Activated B cell treated with CpG ODN at 0.5 μM for 24 hours (primary cell): ENCODE measurements at regions of chr3 and their contacts with region 1.

Region 1: GRCh38 chr3:114418724-114419543 is 125.1 kb downstream of the TIGIT start:
- DNase-seq: no peak
- ATAC-seq: peak; percentile 75
- H3K4me3 Mint-ChIP-seq: peak overlapping the region; percentile 64
- H3K27ac Mint-ChIP-seq: peak overlapping the region; percentile 83
- H3K4me1 Mint-ChIP-seq: peaks cover 45% of the 10 kb centered on the region
- H3K27me3 Mint-ChIP-seq: no peaks in the 10 kb centered on the region
- CTCF ChIP-seq: peak; percentile 22

Region 2: DNA sequence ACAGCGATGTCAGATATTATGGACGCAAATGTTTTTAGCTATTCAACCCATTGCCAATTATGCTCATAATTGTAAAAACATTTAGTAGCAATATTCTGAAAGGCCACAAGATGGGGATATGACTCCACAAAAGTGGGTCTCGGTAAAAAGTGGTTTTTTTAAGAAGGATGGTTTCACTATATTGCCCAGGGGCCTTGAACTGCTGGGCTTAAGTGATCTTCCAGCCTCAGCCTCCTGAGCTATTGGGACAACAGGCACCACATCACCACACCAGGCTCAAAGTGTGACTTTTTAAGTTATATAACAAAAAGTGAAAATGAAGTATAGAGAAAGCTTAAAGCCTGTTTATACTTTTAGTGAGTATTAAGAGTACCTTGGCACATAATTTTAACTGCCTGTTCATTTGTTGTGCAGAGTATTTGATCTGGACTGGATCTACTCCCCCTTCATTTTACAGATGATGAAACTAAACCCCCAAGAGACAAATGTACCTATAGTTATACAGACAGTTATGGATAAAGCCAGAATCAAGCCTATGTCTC is 682.3 kb before region 1 on chr3:
- CTCF ChIA-PET with region 1: no interaction called
- POLR2A ChIA-PET with region 1: no interaction called
- intact Hi-C with region 1: loop called (anchors 2 kb)
- DNase-seq: no peak
- ATAC-seq: peak; percentile 86
- H3K4me3 Mint-ChIP-seq: no peak overlapping the region
- H3K27ac Mint-ChIP-seq: peak overlapping the region; percentile 76
- H3K4me1 Mint-ChIP-seq: peaks cover 40% of the 10 kb centered on the region
- H3K27me3 Mint-ChIP-seq: no peaks in the 10 kb centered on the region
- CTCF ChIP-seq: no peak

Region 3: DNA sequence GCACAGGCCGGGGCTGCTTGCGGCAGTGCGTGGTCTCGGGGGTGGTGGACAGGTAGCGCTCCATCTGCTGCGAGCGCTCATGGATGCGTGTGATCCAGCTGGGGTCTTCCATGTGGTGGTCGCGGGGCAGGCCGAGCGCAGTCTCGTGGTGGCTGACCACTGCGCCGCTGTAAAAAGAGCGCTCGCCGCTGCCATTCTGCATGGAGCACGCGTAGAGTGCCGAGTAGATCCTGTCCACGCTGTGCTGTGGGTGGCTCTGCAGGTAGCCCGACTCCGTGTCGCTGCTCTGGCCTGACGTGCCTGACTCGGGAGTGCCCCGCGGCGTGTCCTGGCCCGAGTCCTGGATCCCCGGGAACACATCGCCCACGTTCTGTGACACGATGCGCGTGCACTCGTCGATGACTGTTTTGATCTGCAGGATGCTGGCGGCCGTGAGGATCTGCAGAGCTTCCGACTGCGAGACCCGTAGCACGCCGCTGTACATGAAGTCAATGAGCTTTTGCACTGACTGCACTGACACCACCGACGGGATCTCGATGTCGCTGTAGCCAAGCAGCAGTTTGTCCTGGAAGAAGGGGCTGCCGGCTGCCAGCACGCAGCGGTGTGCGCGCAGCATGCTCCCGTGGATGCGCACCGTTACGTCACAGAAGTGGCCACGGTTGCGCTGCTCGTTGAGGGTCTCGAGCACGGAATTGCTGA is 67.7 kb before region 1 on chr3:
- CTCF ChIA-PET with region 1: no interaction called
- POLR2A ChIA-PET with region 1: no interaction called
- intact Hi-C with region 1: no loop called
- DNase-seq: no peak
- ATAC-seq: no peak
- H3K4me3 Mint-ChIP-seq: no peak overlapping the region
- H3K27ac Mint-ChIP-seq: no peak overlapping the region
- H3K4me1 Mint-ChIP-seq: peaks cover under 1% of the 10 kb centered on the region
- H3K27me3 Mint-ChIP-seq: no peaks in the 10 kb centered on the region
- CTCF ChIP-seq: no peak

Region 4: DNA sequence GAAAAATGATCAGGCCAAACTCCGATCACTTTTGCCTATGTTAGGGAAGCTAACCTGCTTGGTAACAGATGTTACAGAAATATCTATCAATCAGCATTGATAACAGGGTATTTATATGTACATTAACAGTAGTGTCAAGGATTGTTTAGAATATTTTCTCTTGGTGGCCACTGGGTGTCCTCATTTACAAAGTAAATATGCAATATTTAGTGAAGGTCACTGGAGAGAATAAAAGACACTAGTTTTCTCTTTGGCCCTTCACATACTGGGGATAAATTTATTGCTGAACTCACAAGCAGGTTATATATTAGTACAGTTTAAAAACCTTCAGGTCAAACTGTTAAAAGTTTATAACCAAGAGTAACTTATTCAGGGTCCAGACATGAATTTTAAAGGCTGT is 56.1 kb before region 1 on chr3:
- CTCF ChIA-PET with region 1: interaction called, 7 read pairs
- POLR2A ChIA-PET with region 1: no interaction called
- intact Hi-C with region 1: loop called (anchors 1 kb)
- DNase-seq: no peak
- ATAC-seq: peak; percentile 34
- H3K4me3 Mint-ChIP-seq: no peak overlapping the region
- H3K27ac Mint-ChIP-seq: no peak overlapping the region
- H3K4me1 Mint-ChIP-seq: peaks cover 4% of the 10 kb centered on the region
- H3K27me3 Mint-ChIP-seq: no peaks in the 10 kb centered on the region
- CTCF ChIP-seq: no peak

Region 5: DNA sequence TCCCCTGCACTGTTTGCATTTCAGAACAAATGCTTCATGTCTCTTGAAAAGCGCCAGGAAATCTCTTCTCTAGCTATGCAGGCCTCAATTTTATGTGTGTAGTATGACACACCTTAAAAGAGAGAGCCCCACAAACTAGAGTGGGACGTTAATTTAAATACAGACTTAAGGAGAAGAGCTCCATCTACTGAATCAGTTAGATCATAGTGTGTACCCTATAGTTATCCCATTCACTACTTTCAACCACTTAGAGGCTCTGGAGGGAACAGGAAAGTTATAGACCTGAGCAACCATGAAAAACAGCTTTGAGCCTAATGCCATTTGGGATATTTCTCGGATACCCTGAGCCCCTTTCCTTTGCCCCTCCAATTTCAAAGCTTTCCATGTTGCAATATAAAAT is 28.6 kb after region 1 on chr3:
- CTCF ChIA-PET with region 1: interaction called, 11 read pairs
- POLR2A ChIA-PET with region 1: interaction called, 10 read pairs
- intact Hi-C with region 1: loop called (anchors 1 kb)
- DNase-seq: no peak
- ATAC-seq: no peak
- H3K4me3 Mint-ChIP-seq: peak overlapping the region; percentile 41
- H3K27ac Mint-ChIP-seq: peak overlapping the region; percentile 71
- H3K4me1 Mint-ChIP-seq: peaks cover 69% of the 10 kb centered on the region
- H3K27me3 Mint-ChIP-seq: no peaks in the 10 kb centered on the region
- CTCF ChIP-seq: no peak

Region 6: GRCh38 chr3:114464548-114464947 is 45.6 kb after region 1 on chr3:
- CTCF ChIA-PET with region 1: interaction called, 5 read pairs
- POLR2A ChIA-PET with region 1: interaction called, 4 read pairs
- intact Hi-C with region 1: loop called (anchors 1 kb)
- DNase-seq: no peak
- ATAC-seq: peak; percentile 97
- H3K4me3 Mint-ChIP-seq: peak overlapping the region; percentile 42
- H3K27ac Mint-ChIP-seq: peak overlapping the region; percentile 85
- H3K4me1 Mint-ChIP-seq: peaks cover 40% of the 10 kb centered on the region
- H3K27me3 Mint-ChIP-seq: no peaks in the 10 kb centered on the region
- CTCF ChIP-seq: no peak

Region 7: GRCh38 chr3:115284980-115285379 is 866.0 kb after region 1 on chr3:
- CTCF ChIA-PET with region 1: no interaction called
- POLR2A ChIA-PET with region 1: no interaction called
- intact Hi-C with region 1: no loop called
- DNase-seq: no peak
- ATAC-seq: no peak
- H3K4me3 Mint-ChIP-seq: no peak overlapping the region
- H3K27ac Mint-ChIP-seq: no peak overlapping the region
- H3K4me1 Mint-ChIP-seq: no peaks in the 10 kb centered on the region
- H3K27me3 Mint-ChIP-seq: peaks cover 5% of the 10 kb centered on the region
- CTCF ChIP-seq: no peak